ENCODE measurements at regions of chr19 and their contacts with region 1.

Region 1: GRCh38 chr19:38095411-38096308 is 128.4 kb downstream of the DPF1 start:
- DNase-seq: peak; percentile 82
- H3K4me3 ChIP-seq: no peak overlapping the region
- H3K27ac ChIP-seq: no peak overlapping the region
- H3K4me1 ChIP-seq: no peaks in the 10 kb centered on the region
- H3K27me3 ChIP-seq: no peaks in the 10 kb centered on the region
- CTCF ChIP-seq: peak; percentile 19 to 51 (median 30)
- POLR2A ChIP-seq: no peak

Region 2: GRCh38 chr19:37906869-37907734 is 188.6 kb before region 1 on chr19 and contains the start of gene SIPA1L3:
- intact Hi-C with region 1: loop called (anchors 10 kb)
- DNase-seq: peak; percentile 97
- H3K4me3 ChIP-seq: peak within 1 kb of the TSS; percentile 80 to 97
- H3K27ac ChIP-seq: peak within 1 kb of the TSS; percentile 60 to 70
- H3K4me1 ChIP-seq: peaks cover 3% of the 10 kb centered on the region
- H3K27me3 ChIP-seq: no peaks in the 10 kb centered on the region
- CTCF ChIP-seq: no peak
- POLR2A ChIP-seq: no peak
- total RNA-seq, gene SIPA1L3: 43.7 to 47.6 TPM

Measured in testis (tissue), 5 donors.